ENCODE measurements at regions of chr15 and their contacts with region 1.

Region 1: GRCh38 chr15:73273181-73274002 is 95.4 kb downstream of the HCN4 start:
- DNase-seq: peak; percentile 65
- ATAC-seq: peak; percentile 86
- H3K4me3 Mint-ChIP-seq: no peak overlapping the region
- H3K27ac Mint-ChIP-seq: no peak overlapping the region
- H3K4me1 Mint-ChIP-seq: peaks cover 3% of the 10 kb centered on the region
- H3K27me3 Mint-ChIP-seq: peaks cover 5% of the 10 kb centered on the region

Region 2: DNA sequence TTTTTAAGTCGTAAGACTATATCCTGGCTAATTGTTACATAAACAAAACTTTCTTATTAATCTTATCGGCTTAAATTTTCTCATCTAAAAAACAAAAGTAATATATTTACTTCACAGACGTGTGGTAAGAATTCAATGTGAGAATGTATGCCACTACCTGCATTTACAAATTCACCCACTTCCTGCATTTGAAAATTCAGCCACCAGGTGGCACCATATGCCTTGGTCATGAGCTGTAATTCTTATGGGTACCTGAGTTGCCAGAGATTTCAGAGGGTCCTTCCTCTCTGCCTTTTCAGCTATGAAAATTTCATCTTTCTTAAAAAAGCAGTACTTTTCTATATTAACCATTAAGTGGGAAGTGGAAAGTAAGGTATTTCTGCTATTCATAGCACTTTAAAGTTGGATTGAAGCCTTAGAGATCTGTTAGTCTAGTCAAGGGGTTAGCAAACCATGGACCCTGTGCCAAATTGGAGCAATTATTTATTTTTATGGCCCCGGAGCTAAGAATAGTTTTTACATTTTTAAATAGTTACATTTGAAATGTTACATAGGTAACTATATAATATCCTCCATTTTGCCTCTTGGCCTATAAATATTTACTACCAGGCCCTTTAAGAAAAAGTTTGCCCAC is 32.4 kb before region 1 on chr15:
- CTCF ChIA-PET with region 1: interaction called, 96 read pairs
- POLR2A ChIA-PET with region 1: no interaction called
- DNase-seq: peak; percentile 83
- ATAC-seq: peak; percentile 51
- H3K4me3 Mint-ChIP-seq: no peak overlapping the region
- H3K27ac Mint-ChIP-seq: no peak overlapping the region
- H3K4me1 Mint-ChIP-seq: no peaks in the 10 kb centered on the region
- H3K27me3 Mint-ChIP-seq: peaks cover 5% of the 10 kb centered on the region

Region 3: DNA sequence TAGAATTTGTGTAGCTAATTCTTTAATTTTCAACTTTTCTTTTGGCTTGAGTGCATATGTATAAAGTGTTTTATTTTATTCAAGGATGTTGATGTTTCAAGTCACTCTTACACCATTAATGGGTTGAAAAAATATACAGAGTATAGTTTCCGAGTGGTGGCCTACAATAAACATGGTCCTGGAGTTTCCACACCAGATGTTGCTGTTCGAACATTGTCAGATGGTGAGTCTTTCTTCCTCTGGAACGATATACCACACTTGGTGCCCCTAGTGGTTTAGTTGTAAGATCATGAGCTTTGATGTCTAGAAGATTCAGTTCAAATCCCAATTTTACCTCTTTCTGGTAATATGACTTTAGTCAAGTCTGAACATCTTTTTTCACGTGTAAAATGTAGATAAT is 23.9 kb before region 1 on chr15:
- CTCF ChIA-PET with region 1: interaction called, 96 read pairs
- POLR2A ChIA-PET with region 1: no interaction called
- DNase-seq: no peak
- ATAC-seq: no peak
- H3K4me3 Mint-ChIP-seq: no peak overlapping the region
- H3K27ac Mint-ChIP-seq: no peak overlapping the region
- H3K4me1 Mint-ChIP-seq: no peaks in the 10 kb centered on the region
- H3K27me3 Mint-ChIP-seq: peaks cover 2% of the 10 kb centered on the region

Region 4: DNA sequence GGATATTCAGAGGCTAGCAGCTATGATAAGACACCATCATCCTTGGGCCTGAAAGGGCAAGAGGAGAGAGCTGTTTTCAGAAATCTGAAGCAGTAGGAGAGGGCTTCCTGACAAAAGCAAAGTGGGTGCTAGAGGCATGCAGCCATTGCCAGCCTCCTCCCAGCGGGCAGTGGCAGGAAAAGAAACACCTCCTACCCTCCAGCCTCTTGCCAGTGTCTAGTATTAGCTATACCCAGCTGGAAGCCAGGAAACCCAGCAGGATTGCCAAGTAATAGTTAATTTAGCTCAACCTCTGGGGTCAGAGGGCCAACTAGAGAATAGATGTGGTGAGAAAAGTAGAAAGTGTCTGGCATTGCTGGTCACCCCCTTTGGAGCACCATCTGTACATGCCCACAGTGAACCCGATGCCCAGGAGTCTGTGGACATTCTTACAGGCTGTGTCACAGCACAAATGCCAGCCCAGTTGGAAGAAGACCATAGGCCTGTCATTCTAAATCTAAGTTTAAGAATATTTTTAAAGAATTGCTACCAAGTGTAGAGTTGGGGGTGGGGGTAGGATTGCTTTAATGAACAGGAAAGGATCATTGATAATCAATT is 10.1 kb after region 1 on chr15:
- CTCF ChIA-PET with region 1: interaction called, 10 read pairs
- POLR2A ChIA-PET with region 1: no interaction called
- DNase-seq: no peak
- ATAC-seq: no peak
- H3K4me3 Mint-ChIP-seq: no peak overlapping the region
- H3K27ac Mint-ChIP-seq: no peak overlapping the region
- H3K4me1 Mint-ChIP-seq: no peaks in the 10 kb centered on the region
- H3K27me3 Mint-ChIP-seq: peaks cover 4% of the 10 kb centered on the region

Measured in activated CD8-positive, alpha-beta T cell treated with anti-CD3 and anti-CD28 coated beads, Interleukin-2, amount 10 ng/mL, durations not matched to agents 7 days and 5 days (primary cell).